H1 (cell line): ENCODE measurements at regions of chr12 and their contacts with region 1.

Region 1: DNA sequence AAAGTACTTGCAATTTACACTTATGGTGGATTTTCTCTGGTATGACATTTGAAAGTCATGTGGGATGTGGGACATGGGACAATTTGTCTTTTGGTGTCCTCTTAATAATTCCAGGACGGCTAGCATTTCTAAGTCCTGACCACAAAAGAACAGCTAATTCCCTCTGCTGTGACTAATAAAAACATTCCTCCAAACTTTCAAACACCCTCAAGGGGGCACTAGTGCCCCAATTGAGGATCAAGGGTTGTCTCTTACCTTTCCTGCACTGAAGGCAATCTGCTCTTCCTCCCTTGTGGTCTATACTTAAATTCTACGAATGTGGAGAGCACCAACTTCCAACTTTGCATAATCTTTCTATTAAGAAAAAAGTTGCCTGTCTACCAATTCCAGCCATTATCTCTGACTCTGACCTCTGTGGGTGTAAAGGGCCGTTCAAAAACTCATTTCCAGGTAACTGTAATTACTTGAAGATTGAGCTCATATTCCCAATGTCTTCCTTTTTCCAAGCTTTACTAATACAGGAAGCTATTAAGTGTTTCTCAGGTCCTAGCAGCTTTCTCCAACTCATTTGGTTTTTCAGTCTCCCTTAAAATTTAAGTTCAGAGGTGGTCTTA is 210.2 kb downstream of the PTPRO start:
- DNase-seq: peak; percentile 36 to 56
- H3K4me3 ChIP-seq: no peak overlapping the region
- H3K27ac ChIP-seq: no peak overlapping the region
- H3K4me1 ChIP-seq: no peaks in the 10 kb centered on the region
- H3K27me3 ChIP-seq: no peaks in the 10 kb centered on the region
- CTCF ChIP-seq: peak in 2 of 3 experiments; percentile 70 to 76; a peak in 3 of 4 replicates
- EP300 ChIP-seq: no peak
- POLR2A ChIP-seq: no peak
- RAD21 ChIP-seq: peak; percentile 85 to 87

Region 2: GRCh38 chr12:15546102-15546701 is 13.7 kb after region 1 on chr12:
- CTCF ChIA-PET with region 1: interaction called, 23 read pairs
- POLR2A ChIA-PET with region 1: no interaction called
- DNase-seq: no peak
- H3K4me3 ChIP-seq: no peak overlapping the region
- H3K27ac ChIP-seq: no peak overlapping the region
- H3K4me1 ChIP-seq: no peaks in the 10 kb centered on the region
- H3K27me3 ChIP-seq: no peaks in the 10 kb centered on the region
- CTCF ChIP-seq: no peak
- EP300 ChIP-seq: no peak
- POLR2A ChIP-seq: no peak
- RAD21 ChIP-seq: no peak

Region 3: DNA sequence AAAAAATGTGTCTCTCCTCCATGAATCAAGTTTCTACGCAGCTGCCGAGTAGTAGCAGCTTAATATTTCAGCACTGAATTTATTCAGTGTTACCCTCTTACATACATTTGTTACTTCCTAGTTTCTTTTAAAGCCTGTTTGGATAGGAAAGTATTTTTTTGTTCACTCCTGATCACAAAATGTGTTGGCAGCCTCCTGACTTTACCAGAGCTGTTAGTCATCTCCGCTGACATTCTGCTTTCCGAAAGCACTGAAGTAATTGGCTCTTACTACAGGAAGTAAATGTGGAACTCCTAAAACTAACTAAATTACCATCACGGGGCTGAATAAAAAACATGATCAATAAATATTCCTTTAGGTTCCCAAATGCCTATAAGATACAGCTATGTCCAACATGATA is 31.2 kb after region 1 on chr12:
- CTCF ChIA-PET with region 1: interaction called, 25 read pairs
- POLR2A ChIA-PET with region 1: no interaction called
- DNase-seq: no peak
- H3K4me3 ChIP-seq: no peak overlapping the region
- H3K27ac ChIP-seq: no peak overlapping the region
- H3K4me1 ChIP-seq: peaks cover 0 to 3% (median under 1%) of the 10 kb centered on the region in 4 experiments; a peak in 4 of 7 replicates
- H3K27me3 ChIP-seq: peaks cover 0 to 1% (median 0%) of the 10 kb centered on the region in 4 experiments; a peak in 1 of 7 replicates
- CTCF ChIP-seq: no peak
- EP300 ChIP-seq: no peak
- POLR2A ChIP-seq: no peak
- RAD21 ChIP-seq: no peak